OCI-LY7 (cell line): ENCODE measurements at regions of chr6 and their contacts with region 1.

Region 1: DNA sequence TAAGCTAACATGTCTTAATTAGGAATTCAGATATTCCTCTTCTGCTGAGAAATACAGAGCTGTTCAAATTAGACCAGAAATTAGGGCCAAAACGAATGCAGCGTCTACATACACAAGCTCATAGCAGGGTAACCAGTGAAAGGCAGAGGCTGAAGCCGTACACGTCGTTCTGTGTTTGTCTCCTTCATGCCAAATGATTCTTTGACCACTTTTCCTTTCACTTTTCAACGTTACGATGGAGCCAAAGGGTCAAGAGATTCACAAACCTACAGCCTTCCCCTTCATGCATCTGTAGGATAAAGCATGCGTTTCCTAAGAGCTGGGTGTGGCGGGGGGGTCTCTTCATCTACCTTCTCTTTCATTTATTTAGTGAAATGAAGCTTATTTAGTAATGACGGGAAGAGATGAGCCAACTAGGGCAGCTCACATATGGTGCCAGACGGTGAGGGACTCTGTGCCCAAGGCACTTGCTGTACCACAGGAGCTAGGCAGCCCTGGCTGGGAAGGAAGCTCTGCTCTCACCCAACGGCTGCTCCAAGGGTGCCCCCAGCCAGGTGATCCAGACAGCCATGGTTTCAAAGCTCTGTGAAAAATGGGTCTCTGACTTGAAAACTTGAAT is 178.0 kb downstream of the ATXN1 start:
- DNase-seq: no peak
- H3K4me3 ChIP-seq: no peak overlapping the region
- H3K27ac ChIP-seq: no peak overlapping the region
- H3K4me1 ChIP-seq: no peaks in the 10 kb centered on the region
- CTCF ChIP-seq: no peak

Region 2: GRCh38 chr6:16570946-16571345 is 12.3 kb before region 1 on chr6:
- CTCF ChIA-PET with region 1: no interaction called
- POLR2A ChIA-PET with region 1: no interaction called
- intact Hi-C with region 1: no loop called
- DNase-seq: no peak
- H3K4me3 ChIP-seq: no peak overlapping the region
- H3K27ac ChIP-seq: no peak overlapping the region
- H3K4me1 ChIP-seq: no peaks in the 10 kb centered on the region
- CTCF ChIP-seq: no peak

Region 3: DNA sequence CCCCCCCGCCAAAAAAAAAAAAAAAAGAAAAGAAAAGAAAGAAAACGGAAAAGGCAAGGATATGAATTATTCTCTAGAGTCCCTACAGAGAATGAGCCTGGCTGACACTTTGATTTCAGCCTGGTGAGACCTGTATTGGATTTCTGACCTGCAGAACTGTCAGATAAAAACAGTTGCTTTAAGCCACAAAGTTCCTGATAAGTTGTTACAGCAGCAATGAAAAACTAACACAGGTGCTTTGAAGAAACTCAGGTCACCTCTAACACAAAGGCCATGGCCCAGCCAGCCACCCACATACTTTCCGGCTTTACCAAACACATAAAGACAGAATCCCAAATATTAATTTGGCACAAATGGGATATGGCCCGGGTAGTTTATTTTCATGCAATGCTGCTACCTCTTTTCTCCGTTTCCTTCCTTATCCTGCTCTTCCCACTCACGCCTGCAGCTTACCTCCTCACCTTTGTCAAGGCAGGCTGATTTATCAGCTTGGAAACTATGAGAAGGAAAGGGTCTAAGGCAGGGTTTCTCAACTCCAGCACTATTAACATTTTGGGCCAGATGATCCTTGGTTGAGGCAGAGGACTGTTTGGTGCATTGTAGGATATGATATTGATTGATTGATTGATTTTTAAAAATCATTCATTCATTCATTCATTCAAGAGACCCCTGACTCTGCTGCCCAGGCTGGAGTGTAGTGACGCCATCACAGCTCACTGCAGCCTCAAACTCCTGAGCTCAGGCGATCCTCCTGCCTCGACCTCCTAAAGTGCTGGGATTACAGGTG is 90.0 kb after region 1 on chr6:
- CTCF ChIA-PET with region 1: no interaction called
- POLR2A ChIA-PET with region 1: interaction called, 10 read pairs
- intact Hi-C with region 1: no loop called
- DNase-seq: no peak
- H3K4me3 ChIP-seq: no peak overlapping the region
- H3K27ac ChIP-seq: no peak overlapping the region
- H3K4me1 ChIP-seq: no peaks in the 10 kb centered on the region
- CTCF ChIP-seq: no peak

Region 4: DNA sequence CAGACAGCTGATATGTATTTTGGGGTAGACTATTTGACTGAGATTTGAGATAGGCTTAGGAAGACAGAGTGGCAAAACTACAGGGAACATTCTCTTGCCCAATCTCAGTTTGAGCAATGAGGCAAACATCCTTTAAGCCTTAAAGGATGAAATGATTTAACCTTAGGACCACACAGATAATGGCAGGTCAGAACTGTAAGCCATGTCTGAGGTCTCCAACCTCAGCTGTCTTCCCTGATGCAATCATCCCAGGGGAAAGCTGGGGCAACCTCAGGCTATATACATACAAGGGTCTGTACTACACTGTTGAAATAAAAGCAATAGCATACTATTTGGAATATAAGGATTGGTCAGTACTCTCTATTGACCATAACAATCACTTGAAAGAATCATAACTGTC is 1207.2 kb after region 1 on chr6:
- CTCF ChIA-PET with region 1: no interaction called
- POLR2A ChIA-PET with region 1: no interaction called
- intact Hi-C with region 1: no loop called
- DNase-seq: no peak
- H3K4me3 ChIP-seq: no peak overlapping the region
- H3K27ac ChIP-seq: no peak overlapping the region
- H3K4me1 ChIP-seq: no peaks in the 10 kb centered on the region
- CTCF ChIP-seq: no peak